AG04449 (cell line): ENCODE measurements at regions of chr2 and their contacts with region 1.

Region 1: GRCh38 chr2:44392338-44392943 is 30.7 kb downstream of the CAMKMT start:
- DNase-seq: no peak
- H3K4me3 ChIP-seq: no peak overlapping the region
- CTCF ChIP-seq: peak; percentile 44

Region 2: DNA sequence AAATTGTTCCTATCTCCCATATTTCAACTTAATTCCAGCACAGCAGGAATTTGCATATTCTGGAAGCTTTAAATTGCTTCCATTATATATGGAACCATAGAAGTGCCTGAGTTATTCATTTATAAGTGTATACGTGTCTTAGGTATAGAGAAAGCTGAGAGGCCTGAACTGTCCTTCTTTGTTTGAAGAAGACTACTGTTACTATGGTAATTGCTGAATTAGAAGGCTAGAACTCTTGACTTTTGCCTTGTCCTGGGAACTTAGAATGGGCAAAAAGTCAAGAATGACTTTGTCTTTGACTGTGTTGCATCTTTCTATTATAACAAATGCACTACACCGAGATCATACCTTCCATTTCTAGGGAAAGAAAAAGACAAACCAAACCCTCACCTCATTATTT is 15.0 kb before region 1 on chr2:
- CTCF ChIA-PET with region 1: interaction called, 37 read pairs
- POLR2A ChIA-PET with region 1: no interaction called
- DNase-seq: no peak
- H3K4me3 ChIP-seq: no peak overlapping the region
- CTCF ChIP-seq: no peak

Region 3: DNA sequence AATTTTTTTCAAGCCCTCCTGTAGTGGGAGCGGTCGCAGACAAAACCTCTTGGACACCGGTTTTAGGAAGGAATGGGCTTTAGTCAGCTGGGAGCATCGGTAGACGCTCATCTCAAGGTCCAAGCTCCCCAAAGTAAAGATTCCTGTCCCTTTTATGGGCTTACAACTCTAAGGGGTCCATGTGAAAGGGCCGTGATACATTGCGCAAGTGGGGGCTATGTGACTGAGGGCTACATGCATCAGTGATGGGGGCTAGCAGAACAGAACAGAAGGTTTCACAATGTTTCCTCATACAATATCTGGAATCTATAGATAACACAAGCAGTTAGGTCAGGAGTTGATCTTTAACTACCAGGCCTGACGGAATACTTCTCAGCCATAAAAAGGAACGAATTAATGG is 31.8 kb after region 1 on chr2:
- CTCF ChIA-PET with region 1: no interaction called
- POLR2A ChIA-PET with region 1: no interaction called
- DNase-seq: no peak
- H3K4me3 ChIP-seq: no peak overlapping the region
- CTCF ChIP-seq: no peak

Region 4: DNA sequence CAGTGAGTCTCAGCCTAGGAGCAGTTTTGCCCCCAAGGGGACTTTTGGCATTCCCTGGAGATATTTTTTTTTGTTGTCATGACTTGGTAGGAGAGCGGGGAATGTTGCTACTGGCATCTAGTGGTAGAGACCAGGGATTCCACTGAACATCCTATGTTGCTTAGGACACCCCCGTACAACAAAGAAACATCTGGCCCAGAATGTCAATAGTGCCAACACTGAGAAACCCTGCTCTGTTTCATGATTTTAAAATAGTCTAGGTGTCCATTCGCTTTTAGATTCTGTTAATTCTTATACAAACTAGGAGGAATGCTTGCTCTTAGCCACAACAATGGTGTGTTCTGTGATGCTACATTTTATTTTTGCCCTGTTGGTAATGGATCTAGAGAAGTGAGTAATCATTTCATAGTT is 323.2 kb after region 1 on chr2:
- CTCF ChIA-PET with region 1: interaction called, 29 read pairs
- POLR2A ChIA-PET with region 1: no interaction called
- DNase-seq: no peak
- H3K4me3 ChIP-seq: no peak overlapping the region
- CTCF ChIP-seq: peak; percentile 55